ENCODE measurements at regions of chr20 and their contacts with region 1.

Region 1: DNA sequence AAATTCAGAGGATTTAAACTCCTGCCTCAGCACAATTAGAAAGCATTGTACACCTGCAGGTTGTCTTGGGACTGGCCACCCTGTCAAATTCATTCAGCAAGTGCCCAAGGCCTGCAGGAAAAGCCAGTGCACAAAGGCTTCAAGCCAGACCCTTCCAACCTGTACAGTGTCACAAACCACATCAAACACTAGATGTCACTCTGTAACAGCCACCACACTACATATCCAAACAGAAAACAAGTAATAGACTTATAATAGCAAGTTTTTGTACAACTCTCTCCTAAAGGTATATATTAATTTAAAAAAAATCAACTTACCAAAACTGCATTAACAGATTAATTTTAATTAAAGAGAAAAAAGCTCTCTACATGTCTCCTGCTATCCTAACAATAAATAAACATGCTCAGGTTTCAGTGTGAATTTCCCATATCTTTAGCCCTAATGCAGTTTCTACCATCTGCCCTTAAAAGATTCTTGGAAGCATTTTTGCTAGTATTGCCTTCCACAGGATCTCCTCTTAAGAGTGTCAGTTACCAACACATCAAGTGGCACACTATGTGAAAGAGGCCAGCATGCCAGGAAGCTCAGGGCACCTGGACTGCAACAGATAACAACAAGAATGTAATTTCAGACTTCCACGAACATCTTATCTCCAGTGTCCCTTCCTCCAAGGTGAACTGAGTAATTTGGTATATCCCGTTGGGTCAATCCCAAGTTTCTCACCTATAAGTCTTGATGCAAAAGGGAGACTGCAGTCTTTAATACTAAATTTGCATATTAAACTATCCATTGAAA is 47.5 kb downstream of the RALGAPA2 start:
- DNase-seq: no peak
- H3K4me3 ChIP-seq: no peak overlapping the region
- H3K27ac ChIP-seq: no peak overlapping the region
- H3K4me1 ChIP-seq: peaks cover 14 to 52% (median 41%) of the 10 kb centered on the region in 6 donors
- H3K27me3 ChIP-seq: no peaks in the 10 kb centered on the region
- CTCF ChIP-seq: peak in 7 of 11 experiments; percentile 43 to 69 (median 49)
- POLR2A ChIP-seq: no peak

Region 2: DNA sequence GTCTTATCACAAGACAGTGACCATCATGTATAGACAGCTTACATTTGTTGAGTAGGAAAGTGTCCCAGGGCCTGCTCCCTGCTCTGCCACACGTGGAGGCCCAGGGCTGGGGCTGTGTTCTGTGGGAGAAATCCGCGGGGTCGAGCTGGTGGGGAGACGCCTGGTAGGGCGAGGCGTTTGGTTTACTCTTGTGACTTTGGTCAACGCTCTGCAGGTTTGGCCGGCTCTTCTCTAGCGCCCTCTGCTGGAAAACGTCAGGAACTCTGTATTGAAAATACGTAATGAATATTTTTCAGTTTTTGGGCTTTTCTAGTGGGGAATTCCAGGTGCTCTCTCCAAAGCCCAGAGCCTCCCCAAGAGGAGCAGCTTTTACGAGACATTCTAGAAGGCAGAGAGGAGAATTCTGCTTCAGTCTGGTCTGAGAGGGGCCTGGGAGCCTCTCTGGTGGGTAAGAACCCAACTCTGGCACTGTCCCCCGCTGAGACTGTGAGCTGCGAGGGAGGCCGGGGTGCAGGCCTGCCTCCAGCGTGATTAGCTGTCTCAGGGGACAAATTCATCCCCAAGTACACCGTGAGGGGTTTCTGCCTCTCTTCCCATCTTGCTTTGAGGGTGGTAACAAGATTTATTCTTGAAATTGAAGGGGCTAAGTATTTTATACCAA is 160.1 kb after region 1 on chr20:
- intact Hi-C with region 1: loop called (anchors 5 kb)
- DNase-seq: peak; percentile 86
- H3K4me3 ChIP-seq: no peak overlapping the region
- H3K27ac ChIP-seq: no peak overlapping the region
- H3K4me1 ChIP-seq: peaks cover 0 to 25% (median 5%) of the 10 kb centered on the region in 6 donors
- H3K27me3 ChIP-seq: peaks cover 0 to 72% (median 6%) of the 10 kb centered on the region in 7 donors
- CTCF ChIP-seq: peak; percentile 10 to 79 (median 63)
- POLR2A ChIP-seq: no peak